ENCODE measurements at regions of chr7 and their contacts with region 1.

Region 1: DNA sequence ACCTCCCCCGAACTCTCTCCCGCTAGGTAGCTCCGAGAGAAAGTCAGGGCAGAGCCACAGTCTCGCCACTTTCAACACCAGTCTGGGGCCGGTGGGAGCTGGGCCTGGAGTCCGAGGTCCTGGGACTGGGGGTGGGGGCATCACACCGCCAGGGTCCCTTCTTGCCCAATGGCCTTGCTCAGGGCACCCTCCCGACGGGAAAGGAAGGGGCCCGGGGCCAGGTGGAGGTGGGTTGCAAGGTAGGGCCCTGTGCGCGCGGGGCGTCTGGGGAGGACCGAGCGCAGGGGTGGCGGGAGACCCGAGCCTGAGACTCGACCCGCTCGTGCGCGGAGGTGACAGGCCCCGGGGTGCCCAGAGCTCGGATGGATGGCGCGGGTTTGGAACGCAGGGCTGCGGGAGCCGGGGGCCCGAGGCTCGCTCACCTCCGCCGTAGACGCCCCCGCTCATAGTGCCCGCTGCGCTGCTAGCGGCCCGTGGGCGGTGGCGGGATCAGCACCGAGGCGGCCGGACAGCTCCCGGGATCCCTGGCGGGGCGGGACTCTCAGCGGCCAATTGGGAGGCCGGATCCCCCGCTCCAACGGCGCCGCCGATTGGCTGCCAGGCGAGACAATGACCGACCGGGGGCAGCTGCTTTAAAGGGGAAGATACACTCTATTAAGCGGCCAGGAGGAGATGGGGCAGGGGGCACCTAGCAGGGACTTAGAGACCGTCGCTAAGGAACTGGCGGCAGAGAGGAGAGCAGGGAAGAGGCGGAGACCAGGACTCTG is at the start of gene ACTL6B:
- DNase-seq: peak in 9 of 10 donors; percentile 35 to 73 (median 55)
- ATAC-seq: peak; percentile 70 to 81
- H3K4me3 Mint-ChIP-seq: peak within 1 kb of the TSS in 1 of 10 donors; percentile 26
- H3K27ac Mint-ChIP-seq: no peak within 1 kb of the TSS
- H3K4me1 Mint-ChIP-seq: peaks cover 0 to 1% (median 0%) of the 10 kb centered on the region in 4 donors
- H3K27me3 Mint-ChIP-seq: peaks cover 19 to 66% (median 38%) of the 10 kb centered on the region in 5 donors
- polyA plus RNA-seq, gene ACTL6B: not detected

Region 2: DNA sequence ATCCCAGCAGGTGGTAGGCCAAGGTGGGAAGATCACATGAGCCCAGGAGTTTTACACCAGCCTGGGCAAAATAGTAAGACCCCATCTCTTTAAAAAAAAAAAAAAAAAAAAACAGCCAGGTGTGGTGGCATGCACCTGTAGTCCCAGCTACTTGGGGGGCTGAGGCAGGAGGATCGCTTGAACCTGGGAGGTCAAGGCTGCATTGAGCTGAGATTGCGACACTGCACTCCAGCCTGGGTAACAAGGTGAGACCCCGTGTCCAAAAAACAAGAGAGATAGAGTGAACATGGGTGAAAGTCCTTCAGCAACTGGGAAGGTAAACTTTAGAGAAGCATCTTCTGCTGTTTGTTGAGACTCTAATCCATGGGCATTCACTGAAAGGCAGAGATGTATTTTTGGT is 513.6 kb before region 1 on chr7:
- POLR2A ChIA-PET with region 1: interaction called, 10 read pairs
- DNase-seq: no peak
- ATAC-seq: no peak
- H3K4me3 Mint-ChIP-seq: no peak overlapping the region
- H3K27ac Mint-ChIP-seq: peak overlapping the region in 1 of 10 donors; percentile 43
- H3K4me1 Mint-ChIP-seq: peaks cover 0 to 22% (median 9%) of the 10 kb centered on the region in 4 donors
- H3K27me3 Mint-ChIP-seq: no peaks in the 10 kb centered on the region